ENCODE measurements at regions of chr2 and their contacts with region 1.

Region 1: DNA sequence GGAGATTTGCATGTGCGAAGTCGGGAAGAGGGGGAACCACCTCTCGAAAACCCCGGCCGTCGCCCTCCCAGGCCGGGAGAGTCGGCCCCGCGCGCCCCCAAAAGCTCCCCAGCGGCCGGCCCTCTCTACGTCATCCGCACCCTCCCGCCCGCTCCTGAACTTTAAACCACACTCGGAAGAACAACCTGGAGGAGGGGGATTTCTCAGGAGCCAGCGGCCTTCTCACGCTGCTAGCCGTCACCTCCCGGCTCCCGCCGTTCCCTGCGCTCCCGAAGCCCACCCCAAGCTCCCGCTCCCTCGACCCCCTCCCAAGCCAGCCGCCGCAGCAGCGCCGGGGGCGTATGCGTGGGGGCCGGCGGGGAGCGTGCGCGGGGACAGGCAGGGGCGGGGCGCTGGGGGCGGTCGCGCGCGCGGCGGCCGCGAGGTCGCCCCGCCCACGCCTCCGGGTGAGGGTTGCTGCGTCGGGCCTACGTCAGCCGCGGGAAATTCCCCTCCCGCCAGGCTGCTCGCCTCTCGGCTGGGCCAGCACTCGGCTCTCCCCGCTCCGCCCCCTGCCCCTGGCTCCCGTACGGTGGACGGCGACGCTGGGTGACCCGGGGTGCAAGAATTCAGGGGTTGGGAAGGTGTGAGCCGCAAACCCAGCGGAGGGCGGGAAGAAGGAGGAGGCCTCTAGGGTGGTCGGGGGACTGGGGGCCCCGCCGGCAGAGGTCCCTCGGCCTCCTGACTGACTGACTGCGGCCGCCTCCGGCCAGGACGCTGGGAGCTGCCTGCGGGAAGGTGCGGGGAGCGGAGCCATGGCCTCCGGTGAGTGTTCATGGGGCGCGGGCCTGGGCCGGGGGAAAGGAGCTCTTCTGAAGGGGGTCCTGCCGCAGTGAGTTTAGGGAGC is at the start of gene REL:
- DNase-seq: peak; percentile 51 to 92
- H3K4me3 ChIP-seq: peak within 1 kb of the TSS; percentile 85 to 93
- H3K27ac ChIP-seq: peak within 1 kb of the TSS; percentile 91 to 95
- H3K4me1 ChIP-seq: peaks cover 0 to 6% of the 10 kb centered on the region in 2 donors
- H3K27me3 ChIP-seq: no peaks in the 10 kb centered on the region
- CTCF ChIP-seq: no peak
- total RNA-seq, gene REL: 5.3 TPM

Region 2: DNA sequence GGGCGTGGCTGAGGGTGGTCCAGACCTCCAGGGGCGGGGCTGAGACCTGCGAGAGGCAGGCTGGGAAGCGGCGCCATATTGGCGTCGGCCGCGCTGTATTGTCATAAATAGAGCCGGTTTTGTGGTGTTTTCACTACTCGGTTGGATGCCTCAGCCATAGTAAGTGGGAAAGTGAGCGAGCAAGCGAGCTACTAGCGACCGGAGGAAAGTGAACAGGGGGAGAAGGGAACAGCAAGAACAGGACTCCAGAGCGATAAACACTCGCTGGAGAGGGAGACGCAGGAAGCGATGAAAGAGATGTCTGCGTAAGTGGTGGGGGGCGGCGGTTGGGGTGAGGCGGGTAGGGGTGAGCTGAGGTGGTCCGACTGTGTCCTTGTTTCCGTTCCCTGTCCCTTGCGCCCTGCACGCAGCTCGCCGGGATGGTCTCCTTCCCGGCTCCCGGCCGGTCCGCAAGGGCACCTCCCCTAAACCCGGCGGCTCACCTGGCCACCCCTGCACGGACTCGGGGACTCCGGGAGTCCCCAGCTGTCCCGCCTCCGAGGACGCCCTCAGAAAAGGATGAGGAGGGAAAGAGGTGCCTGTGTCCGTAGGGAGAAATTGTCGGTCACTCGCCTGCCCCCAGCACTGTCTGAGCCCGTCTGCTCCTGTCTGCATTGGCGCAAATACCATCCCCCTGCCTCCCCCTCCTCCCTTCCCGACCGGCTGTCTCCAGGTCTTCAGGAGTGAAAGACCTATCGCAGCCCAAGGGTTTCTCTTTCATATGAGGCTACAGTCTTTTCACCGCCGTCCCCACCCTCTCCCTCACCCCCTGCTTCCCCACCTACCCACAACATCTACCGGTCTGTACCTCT is 124.9 kb before region 1 on chr2 and contains the start of gene PAPOLG:
- intact Hi-C with region 1: loop called (anchors 1 kb)
- DNase-seq: peak; percentile 89 to 98
- H3K4me3 ChIP-seq: peak within 1 kb of the TSS; percentile 71 to 73
- H3K27ac ChIP-seq: peak within 1 kb of the TSS; percentile 71 to 81
- H3K4me1 ChIP-seq: peaks cover 0 to 9% of the 10 kb centered on the region in 2 donors
- H3K27me3 ChIP-seq: no peaks in the 10 kb centered on the region
- CTCF ChIP-seq: no peak
- total RNA-seq, gene PAPOLG: 11.4 TPM

Region 3: GRCh38 chr2:60934165-60934722 is 53.0 kb after region 1 on chr2:
- intact Hi-C with region 1: no loop called
- DNase-seq: no peak
- H3K4me3 ChIP-seq: no peak overlapping the region
- H3K27ac ChIP-seq: no peak overlapping the region
- H3K4me1 ChIP-seq: no peaks in the 10 kb centered on the region
- H3K27me3 ChIP-seq: no peaks in the 10 kb centered on the region
- CTCF ChIP-seq: no peak

Region 4: DNA sequence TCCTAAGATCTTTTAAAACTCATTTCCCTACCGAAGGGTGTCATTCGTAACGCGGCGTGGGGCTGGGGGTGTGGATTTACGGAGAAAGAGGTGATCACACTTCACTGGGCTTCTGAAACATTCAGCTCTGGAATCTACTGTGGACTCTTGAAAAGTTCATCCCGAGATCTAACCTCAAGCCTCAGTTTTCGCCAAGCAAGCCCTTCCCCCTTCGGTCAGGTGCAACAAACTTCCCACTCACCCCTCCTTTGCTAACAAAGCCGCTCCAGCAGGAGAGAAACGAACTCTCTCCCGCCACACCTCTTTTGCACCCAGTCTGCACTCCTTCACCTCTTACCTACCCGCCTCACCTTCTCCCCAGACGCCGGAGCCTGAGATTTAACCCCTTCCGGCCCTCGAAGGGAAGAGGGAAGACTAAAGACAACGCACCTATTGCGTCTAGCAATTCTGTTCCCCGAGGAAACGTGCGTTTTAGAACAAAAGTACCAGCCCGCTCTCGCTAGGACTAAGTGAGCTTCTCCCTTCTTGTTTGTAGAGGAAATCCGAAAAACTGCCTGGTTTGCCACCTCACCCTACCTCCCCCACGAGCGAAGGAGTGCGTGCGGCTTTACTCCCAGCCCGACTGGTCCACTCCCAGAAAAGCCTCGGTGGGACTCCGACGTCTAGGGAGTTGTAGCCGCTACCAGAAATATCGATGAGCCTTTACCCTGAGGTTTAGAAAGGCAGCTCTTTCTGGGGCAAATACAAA is 135.7 kb after region 1 on chr2:
- intact Hi-C with region 1: loop called (anchors 2 kb)
- DNase-seq: peak in 1 of 2 donors; percentile 76
- H3K4me3 ChIP-seq: peak overlapping the region; percentile 78 to 87
- H3K27ac ChIP-seq: peak overlapping the region; percentile 83 to 94
- H3K4me1 ChIP-seq: peaks cover 0 to 24% of the 10 kb centered on the region in 2 donors
- H3K27me3 ChIP-seq: no peaks in the 10 kb centered on the region
- CTCF ChIP-seq: no peak

Region 5: GRCh38 chr2:61065715-61066709 is 184.7 kb after region 1 on chr2 and contains the start of gene SANBR:
- intact Hi-C with region 1: loop called (anchors 5 kb)
- DNase-seq: peak; percentile 24 to 88
- H3K4me3 ChIP-seq: peak within 1 kb of the TSS; percentile 88 to 91
- H3K27ac ChIP-seq: peak within 1 kb of the TSS; percentile 54 to 59
- H3K4me1 ChIP-seq: no peaks in the 10 kb centered on the region
- H3K27me3 ChIP-seq: no peaks in the 10 kb centered on the region
- CTCF ChIP-seq: no peak
- total RNA-seq, gene SANBR: 10.7 TPM

Region 6: GRCh38 chr2:61144697-61145268 is 263.5 kb after region 1 on chr2:
- intact Hi-C with region 1: loop called (anchors 10 kb)
- DNase-seq: peak; percentile 79 to 97
- H3K4me3 ChIP-seq: peak overlapping the region; percentile 50 to 72
- H3K27ac ChIP-seq: peak overlapping the region; percentile 62 to 71
- H3K4me1 ChIP-seq: peaks cover 0 to 9% of the 10 kb centered on the region in 2 donors
- H3K27me3 ChIP-seq: no peaks in the 10 kb centered on the region
- CTCF ChIP-seq: no peak

Region 7: DNA sequence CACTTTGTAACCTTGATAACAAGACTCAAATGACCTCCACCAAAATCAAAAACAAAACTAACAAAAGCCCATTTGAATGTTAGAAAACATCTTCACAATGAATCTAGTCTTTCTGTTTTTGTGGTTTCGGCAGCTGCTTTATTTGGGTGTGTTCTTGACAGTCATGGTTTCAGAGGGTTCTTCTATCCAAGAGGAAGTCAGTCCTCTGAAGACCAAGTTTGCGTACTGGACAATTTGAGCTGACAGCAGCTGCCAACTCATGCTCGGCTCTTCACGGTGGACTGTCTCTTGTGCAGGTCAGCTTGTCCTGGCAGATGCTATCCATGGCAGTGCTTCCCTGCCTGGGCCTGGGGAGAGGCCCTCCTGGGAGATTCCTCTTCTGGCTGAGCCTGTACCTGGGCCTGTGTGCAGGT is 1533.7 kb after region 1 on chr2:
- intact Hi-C with region 1: no loop called
- DNase-seq: no peak
- H3K4me3 ChIP-seq: no peak overlapping the region
- H3K27ac ChIP-seq: no peak overlapping the region
- H3K4me1 ChIP-seq: peaks cover 0 to 19% of the 10 kb centered on the region in 2 donors
- H3K27me3 ChIP-seq: no peaks in the 10 kb centered on the region
- CTCF ChIP-seq: no peak

Measured in ascending aorta (tissue), 2 donors.